Esophagus muscularis mucosa (tissue), 4 donors: ENCODE measurements at regions of chr15 and their contacts with region 1.

Region 1: DNA sequence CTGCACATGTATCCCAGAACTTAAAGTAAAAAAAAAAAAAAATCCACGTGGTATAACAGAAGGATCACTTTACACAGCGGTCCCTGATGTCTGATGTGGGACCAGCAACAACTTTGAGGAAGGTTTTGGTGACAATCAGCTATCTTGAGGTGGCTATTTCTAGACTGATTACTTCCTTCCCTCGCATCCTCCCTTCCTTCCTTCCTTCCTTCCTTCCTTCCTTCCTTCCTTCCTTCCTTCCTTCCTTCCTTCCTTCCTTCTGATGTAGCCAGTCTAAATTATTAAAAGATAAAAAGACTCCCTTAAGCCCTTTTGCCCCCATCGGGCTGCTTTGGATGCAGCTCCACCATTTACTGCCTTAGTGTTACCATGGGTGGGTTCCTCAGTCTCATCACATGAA is 14.9 kb downstream of the SORD start:
- DNase-seq: no peak
- H3K4me3 ChIP-seq: no peak overlapping the region
- H3K27ac ChIP-seq: no peak overlapping the region
- H3K4me1 ChIP-seq: peaks cover 0 to 11% (median 6%) of the 10 kb centered on the region in 4 donors
- H3K27me3 ChIP-seq: no peaks in the 10 kb centered on the region
- CTCF ChIP-seq: no peak
- EP300 ChIP-seq: no peak
- POLR2A ChIP-seq: no peak

Region 2: GRCh38 chr15:44968475-44968874 is 69.5 kb before region 1 on chr15:
- intact Hi-C with region 1: loop called (anchors 5 kb)
- DNase-seq: no peak
- H3K4me3 ChIP-seq: no peak overlapping the region
- H3K27ac ChIP-seq: no peak overlapping the region
- H3K4me1 ChIP-seq: no peaks in the 10 kb centered on the region
- H3K27me3 ChIP-seq: no peaks in the 10 kb centered on the region
- CTCF ChIP-seq: no peak
- EP300 ChIP-seq: no peak
- POLR2A ChIP-seq: no peak